ENCODE measurements at regions of chr15 and their contacts with region 1.

Region 1: GRCh38 chr15:50145451-50145872 is 26.4 kb upstream of the ATP8B4 start:
- DNase-seq: peak; percentile 78
- ATAC-seq: peak; percentile 89
- H3K4me3 ChIP-seq: peak overlapping the region in 2 of 3 experiments; percentile 31 to 36; a peak in 2 of 6 replicates
- H3K27ac ChIP-seq: no peak overlapping the region
- H3K4me1 ChIP-seq: peaks cover 16% of the 10 kb centered on the region
- H3K27me3 ChIP-seq: no peaks in the 10 kb centered on the region
- CTCF ChIP-seq: peak; percentile 75
- EP300 ChIP-seq: no peak
- POLR2A ChIP-seq: no peak
- RAD21 ChIP-seq: peak; percentile 38; the same call in 1 of the 2 replicates

Region 2: DNA sequence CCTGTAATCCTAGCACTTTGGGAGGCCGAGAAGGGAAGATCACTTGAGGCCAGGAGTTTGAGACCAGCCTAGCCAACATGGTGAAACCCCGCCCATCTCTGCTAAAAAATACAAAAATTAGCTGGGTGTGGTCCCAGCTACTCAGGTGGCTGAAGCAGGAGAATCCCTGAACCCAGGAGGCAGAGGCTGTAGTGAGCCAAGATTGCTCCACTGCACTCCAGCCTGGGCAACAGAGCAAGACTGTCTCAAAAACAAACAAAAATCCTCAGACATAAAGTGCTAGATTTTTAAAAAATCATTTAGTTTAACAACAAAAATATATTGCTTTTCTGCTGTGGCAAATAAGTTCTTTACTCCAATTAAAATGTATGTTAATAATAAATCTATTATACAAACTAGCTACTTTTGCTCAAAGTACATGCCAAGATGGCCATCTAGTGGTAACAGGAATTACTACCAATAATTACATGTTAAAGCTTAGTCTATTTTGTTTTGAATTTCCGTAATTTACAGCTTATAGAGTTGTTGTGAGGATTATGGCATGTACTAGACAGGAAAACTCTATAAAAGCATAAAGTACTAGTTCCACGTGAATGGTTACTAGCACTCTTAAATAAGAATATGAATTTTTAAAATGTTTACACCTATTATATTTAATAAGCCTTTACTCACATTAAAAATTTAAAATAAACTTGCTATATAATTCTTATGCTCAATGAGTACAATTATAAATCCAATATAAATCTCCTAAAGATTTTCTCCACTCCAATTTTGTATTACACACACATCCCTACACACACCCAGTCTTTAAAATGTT is 170.6 kb after region 1 on chr15:
- CTCF ChIA-PET with region 1: interaction called, 12 read pairs
- POLR2A ChIA-PET with region 1: no interaction called
- in situ Hi-C with region 1: loop called (anchors 5 kb)
- intact Hi-C with region 1: loop called (anchors 1 kb)
- DNase-seq: peak; percentile 42
- ATAC-seq: peak; percentile 49; the same call in 1 of the 3 replicates
- H3K4me3 ChIP-seq: no peak overlapping the region
- H3K27ac ChIP-seq: no peak overlapping the region
- H3K4me1 ChIP-seq: no peaks in the 10 kb centered on the region
- H3K27me3 ChIP-seq: no peaks in the 10 kb centered on the region
- CTCF ChIP-seq: peak; percentile 64
- EP300 ChIP-seq: no peak
- POLR2A ChIP-seq: no peak
- RAD21 ChIP-seq: peak; percentile 36; the same call in 1 of the 2 replicates

Measured in HepG2 (cell line).